Cardiac septum (tissue), 1 donor: ENCODE measurements at regions of chr13 and their contacts with region 1.

Region 1: GRCh38 chr13:44435142-44435982 is 61.7 kb downstream of the SERP2 start:
- DNase-seq: peak; percentile 96

Region 2: GRCh38 chr13:44050450-44051063 is 384.8 kb before region 1 on chr13:
- intact Hi-C with region 1: loop called (anchors 2 kb)
- DNase-seq: no peak

Region 3: GRCh38 chr13:44141725-44142539 is 293.4 kb before region 1 on chr13:
- intact Hi-C with region 1: loop called (anchors 2 kb)
- DNase-seq: peak; percentile 100

Region 4: DNA sequence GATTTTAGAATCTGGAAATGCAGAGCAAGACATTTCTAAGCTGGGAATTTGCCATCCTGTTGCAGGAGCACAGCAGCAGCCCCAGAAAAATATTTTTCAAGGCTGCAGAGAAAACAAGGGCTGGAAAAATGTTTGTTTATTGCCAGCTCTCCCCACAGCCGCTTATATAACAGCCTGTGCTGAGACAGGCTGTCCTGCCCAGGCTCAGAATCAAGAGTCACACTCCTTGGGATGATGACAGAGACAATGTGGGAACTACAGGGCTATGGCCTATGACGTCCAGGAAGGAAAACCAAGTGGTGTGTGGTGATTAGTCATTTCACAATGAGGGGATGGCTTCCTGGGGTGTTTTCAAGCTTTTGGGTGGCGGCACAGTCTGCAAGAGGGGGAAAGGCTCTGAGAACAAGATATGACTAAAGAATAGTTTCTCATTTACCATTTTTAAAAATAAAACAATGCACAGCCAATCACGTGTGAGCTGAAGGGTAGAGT is 198.0 kb before region 1 on chr13:
- intact Hi-C with region 1: loop called (anchors 2 kb)
- DNase-seq: no peak

Region 5: GRCh38 chr13:44306401-44307192 is 128.8 kb before region 1 on chr13:
- intact Hi-C with region 1: loop called (anchors 2 kb)
- DNase-seq: peak; percentile 82

Region 6: GRCh38 chr13:44540761-44541434 is 105.5 kb after region 1 on chr13:
- intact Hi-C with region 1: no loop called
- DNase-seq: no peak